Activated CD8-positive, alpha-beta T cell treated with anti-CD3 and anti-CD28 coated beads for 36 hours (primary cell): ENCODE measurements at regions of chr9 and their contacts with region 1.

Region 1: DNA sequence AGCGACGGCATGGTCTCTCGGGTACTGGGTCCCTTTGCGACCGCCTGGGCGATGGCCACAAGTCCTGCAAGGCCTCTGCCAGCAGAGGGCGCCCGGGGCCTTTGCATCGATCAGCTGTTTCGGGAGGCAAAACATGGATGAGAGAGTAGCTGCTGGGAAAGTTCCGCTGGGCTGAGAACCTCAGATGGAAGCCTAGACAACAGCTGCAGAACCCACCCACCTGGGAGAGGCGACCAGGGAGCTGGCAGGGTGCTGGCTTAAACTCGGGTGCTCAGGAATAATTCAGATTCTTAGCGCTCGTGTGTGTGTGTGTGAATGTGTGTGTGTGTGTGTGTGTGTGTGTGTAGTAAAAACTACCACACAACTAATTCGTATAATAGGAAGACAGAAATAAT is 50.0 kb downstream of the TRIM32 start:
- DNase-seq: peak; percentile 77
- ATAC-seq: no peak
- H3K4me3 Mint-ChIP-seq: no peak overlapping the region
- H3K27ac Mint-ChIP-seq: no peak overlapping the region
- H3K4me1 Mint-ChIP-seq: no peaks in the 10 kb centered on the region
- H3K27me3 Mint-ChIP-seq: peaks cover 14% of the 10 kb centered on the region
- CTCF ChIP-seq: peak; percentile 81

Region 2: GRCh38 chr9:116717150-116717549 is 20.0 kb before region 1 on chr9:
- CTCF ChIA-PET with region 1: interaction called, 10 read pairs
- POLR2A ChIA-PET with region 1: no interaction called
- intact Hi-C with region 1: no loop called
- DNase-seq: no peak
- ATAC-seq: no peak
- H3K4me3 Mint-ChIP-seq: no peak overlapping the region
- H3K27ac Mint-ChIP-seq: no peak overlapping the region
- H3K4me1 Mint-ChIP-seq: peaks cover 4% of the 10 kb centered on the region
- H3K27me3 Mint-ChIP-seq: peaks cover 4% of the 10 kb centered on the region
- CTCF ChIP-seq: no peak

Region 3: DNA sequence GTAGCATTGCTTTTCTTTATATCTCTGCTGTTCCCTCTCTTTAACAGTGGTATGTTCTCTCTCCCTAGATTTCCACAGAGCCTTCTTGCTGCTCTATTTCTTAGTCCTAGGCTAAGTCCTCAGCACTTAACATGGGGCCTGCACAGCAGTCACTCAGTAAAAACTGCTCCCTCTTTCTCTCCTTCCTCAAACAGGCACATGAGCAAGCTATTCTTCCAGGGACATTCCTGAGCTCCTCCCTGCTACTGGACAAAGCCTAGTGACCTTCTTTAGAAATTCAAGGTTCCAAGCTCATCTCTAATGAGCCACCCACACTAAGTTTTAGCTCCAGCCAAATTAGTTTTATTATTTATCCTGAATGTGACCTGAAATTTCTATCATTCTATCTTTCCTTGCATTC is 10.5 kb before region 1 on chr9:
- CTCF ChIA-PET with region 1: interaction called, 13 read pairs
- POLR2A ChIA-PET with region 1: no interaction called
- intact Hi-C with region 1: no loop called
- DNase-seq: no peak
- ATAC-seq: no peak
- H3K4me3 Mint-ChIP-seq: no peak overlapping the region
- H3K27ac Mint-ChIP-seq: no peak overlapping the region
- H3K4me1 Mint-ChIP-seq: no peaks in the 10 kb centered on the region
- H3K27me3 Mint-ChIP-seq: no peaks in the 10 kb centered on the region
- CTCF ChIP-seq: no peak

Region 4: DNA sequence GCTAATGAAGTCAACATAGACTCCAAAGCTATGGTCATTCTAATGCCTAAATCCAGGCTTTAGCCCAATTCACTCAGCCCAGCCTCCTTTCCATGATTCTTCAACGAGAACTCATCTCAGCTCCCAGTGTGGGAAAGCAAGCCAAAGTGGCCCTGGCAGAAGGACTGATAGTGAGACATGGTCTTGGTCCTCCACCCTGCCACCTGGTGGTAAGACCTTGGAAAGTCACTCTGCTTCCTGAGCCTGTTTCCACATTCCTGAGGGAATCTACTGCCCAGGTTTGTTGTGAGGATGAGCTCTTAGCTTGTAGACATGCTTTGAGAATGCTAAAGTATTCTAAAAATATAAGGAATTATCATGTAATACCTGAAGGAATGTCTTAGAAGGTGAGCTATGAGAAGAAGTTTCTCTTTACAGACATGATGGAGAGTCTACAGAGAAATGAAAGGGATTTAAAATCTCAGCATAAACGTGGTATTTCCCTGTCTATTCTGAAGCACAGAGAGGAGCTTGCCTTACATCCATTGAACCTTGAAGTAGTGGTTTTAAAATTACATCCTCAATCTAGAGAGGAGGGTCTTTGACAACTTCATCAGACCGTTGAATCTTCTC is 123.5 kb after region 1 on chr9:
- CTCF ChIA-PET with region 1: interaction called, 57 read pairs
- POLR2A ChIA-PET with region 1: no interaction called
- intact Hi-C with region 1: loop called (anchors 5 kb)
- DNase-seq: peak; percentile 26
- ATAC-seq: no peak
- H3K4me3 Mint-ChIP-seq: no peak overlapping the region
- H3K27ac Mint-ChIP-seq: no peak overlapping the region
- H3K4me1 Mint-ChIP-seq: no peaks in the 10 kb centered on the region
- H3K27me3 Mint-ChIP-seq: peaks cover 2% of the 10 kb centered on the region
- CTCF ChIP-seq: peak; percentile 68